Sigmoid colon (tissue), 7 donors: ENCODE measurements at regions of chr5 and their contacts with region 1.

Region 1: GRCh38 chr5:15383469-15383868 is 116.5 kb upstream of the FBXL7 start:
- DNase-seq: no peak
- H3K4me3 ChIP-seq: no peak overlapping the region
- H3K27ac ChIP-seq: no peak overlapping the region
- H3K4me1 ChIP-seq: no peaks in the 10 kb centered on the region
- H3K27me3 ChIP-seq: no peaks in the 10 kb centered on the region
- CTCF ChIP-seq: peak in 3 of 4 experiments; percentile 24 to 52 (median 48)
- EP300 ChIP-seq: no peak
- POLR2A ChIP-seq: no peak

Region 2: DNA sequence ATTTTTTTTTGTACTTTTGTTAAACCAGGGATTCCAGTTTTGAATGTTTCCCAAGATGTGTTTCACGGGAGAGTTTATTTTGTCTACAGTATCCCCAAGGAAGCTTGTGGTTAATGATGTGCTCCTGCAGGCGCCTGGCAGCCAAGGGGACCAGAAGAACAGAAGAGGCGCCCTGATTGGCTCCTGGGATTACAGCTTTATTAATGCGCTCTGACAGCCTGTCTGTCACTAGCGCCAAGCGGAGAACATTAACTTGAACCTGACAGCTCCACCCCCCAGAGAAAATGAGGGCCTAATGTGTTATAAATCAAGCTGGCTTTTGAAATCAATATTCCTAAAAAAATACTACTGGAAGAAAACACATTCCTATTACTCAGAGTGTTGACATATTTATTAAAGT is 111.6 kb after region 1 on chr5:
- intact Hi-C with region 1: no loop called
- DNase-seq: no peak
- H3K4me3 ChIP-seq: no peak overlapping the region
- H3K27ac ChIP-seq: no peak overlapping the region
- H3K4me1 ChIP-seq: peaks cover 0 to 7% (median 0%) of the 10 kb centered on the region in 4 donors
- H3K27me3 ChIP-seq: no peaks in the 10 kb centered on the region
- CTCF ChIP-seq: no peak
- EP300 ChIP-seq: no peak
- POLR2A ChIP-seq: no peak

Region 3: DNA sequence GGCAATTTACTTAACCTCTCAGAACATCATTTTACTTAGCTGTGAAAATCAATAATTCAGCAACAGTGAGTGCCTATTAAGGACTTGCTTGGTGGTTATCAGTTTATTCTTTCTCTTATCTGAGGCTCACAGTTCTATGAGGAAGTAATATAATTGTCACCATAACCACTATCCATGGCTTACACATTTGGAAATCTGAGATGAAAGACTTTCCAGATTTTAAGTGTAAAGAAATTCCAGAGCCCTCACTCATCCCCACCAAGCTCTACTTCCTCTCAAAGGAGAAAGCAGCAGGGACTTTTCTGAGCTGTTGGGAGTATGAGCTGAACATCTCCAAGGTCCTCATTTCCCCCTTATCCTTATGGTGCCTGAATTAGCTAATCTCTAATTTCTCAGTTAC is 438.0 kb after region 1 on chr5:
- intact Hi-C with region 1: loop called (anchors 10 kb)
- DNase-seq: no peak
- H3K4me3 ChIP-seq: no peak overlapping the region
- H3K27ac ChIP-seq: no peak overlapping the region
- H3K4me1 ChIP-seq: peaks cover 0 to 7% (median 0%) of the 10 kb centered on the region in 4 donors
- H3K27me3 ChIP-seq: no peaks in the 10 kb centered on the region
- CTCF ChIP-seq: no peak
- EP300 ChIP-seq: no peak
- POLR2A ChIP-seq: no peak

Region 4: GRCh38 chr5:16364910-16365309 is 981.4 kb after region 1 on chr5:
- intact Hi-C with region 1: no loop called
- DNase-seq: no peak
- H3K4me3 ChIP-seq: no peak overlapping the region
- H3K27ac ChIP-seq: no peak overlapping the region
- H3K4me1 ChIP-seq: no peaks in the 10 kb centered on the region
- H3K27me3 ChIP-seq: no peaks in the 10 kb centered on the region
- CTCF ChIP-seq: no peak
- EP300 ChIP-seq: no peak
- POLR2A ChIP-seq: no peak